Panc1 (cell line): ENCODE measurements at regions of chr14 and their contacts with region 1.

Region 1: DNA sequence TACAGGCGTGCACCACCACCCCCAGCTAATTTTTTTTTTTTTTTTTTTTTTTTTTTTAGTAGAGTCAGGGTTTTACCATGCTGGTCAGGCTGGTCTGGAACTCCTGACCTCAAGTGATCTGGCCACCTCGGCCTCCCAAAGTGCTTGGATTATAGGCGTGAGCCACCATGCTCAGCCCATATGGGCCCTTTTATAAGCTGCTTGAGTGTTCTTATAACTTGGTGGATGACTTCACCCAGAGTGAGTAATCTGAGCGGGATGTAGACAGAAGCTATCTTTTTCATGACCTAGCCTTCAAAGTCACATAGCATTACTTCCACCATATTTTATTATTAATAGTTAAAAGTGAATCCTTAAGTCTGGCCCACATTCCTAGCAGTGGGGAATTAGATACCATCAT is 16.4 kb downstream of the BBOF1 start:
- DNase-seq: no peak
- ATAC-seq: no peak
- H3K4me3 ChIP-seq: no peak overlapping the region
- H3K27ac ChIP-seq: no peak overlapping the region
- H3K4me1 ChIP-seq: no peaks in the 10 kb centered on the region
- H3K27me3 ChIP-seq: no peaks in the 10 kb centered on the region
- CTCF ChIP-seq: no peak

Region 2: DNA sequence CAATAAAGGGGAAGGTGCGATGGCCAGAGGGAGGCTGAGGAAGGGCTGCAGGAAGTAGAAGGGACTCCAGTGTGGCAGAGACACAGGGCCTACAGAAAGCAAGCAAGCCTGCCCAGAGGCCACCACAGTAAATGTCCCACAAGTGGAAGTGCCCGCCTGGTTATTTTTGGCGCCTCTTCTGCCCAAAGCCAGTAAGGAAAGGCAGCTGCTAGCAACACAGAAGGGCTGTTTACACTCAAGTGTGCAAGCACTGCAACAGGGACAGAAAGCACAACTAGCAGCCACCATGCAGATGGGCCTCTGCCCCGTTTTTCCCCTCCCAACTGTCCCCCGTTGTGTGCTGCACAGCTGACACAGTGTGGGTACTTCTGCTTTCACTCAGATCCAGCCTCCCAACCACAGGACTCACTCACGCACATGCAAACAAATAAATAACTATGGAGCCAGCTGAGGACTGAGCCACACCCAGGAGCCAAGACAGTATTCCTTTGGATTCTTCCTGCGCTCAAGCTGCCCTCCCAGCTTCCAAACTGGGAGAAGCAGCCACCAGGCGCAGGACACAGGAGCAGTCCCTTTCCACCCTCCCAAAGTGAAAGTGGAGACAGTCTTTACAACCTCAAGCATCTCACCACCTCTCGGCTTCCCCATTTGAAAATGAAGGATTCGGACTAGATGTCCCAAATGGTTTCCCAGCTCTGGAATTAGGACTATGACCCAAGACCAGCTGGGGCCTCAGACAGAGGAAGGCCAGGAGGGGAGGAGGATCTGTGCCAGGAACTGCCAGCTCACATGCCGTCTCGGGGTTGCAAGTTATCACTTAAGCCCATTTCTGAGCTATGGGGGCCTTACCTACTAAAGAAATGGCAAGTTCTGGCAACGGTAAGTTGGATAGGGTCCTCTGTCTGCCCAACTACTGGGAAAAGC is 281.3 kb before region 1 on chr14:
- CTCF ChIA-PET with region 1: no interaction called
- POLR2A ChIA-PET with region 1: interaction called, 11 read pairs
- in situ Hi-C with region 1: no loop called
- intact Hi-C with region 1: no loop called
- DNase-seq: no peak
- ATAC-seq: peak; percentile 13
- H3K4me3 ChIP-seq: peak overlapping the region; percentile 16 to 85; a peak in 3 of 4 replicates
- H3K27ac ChIP-seq: peak overlapping the region; percentile 97
- H3K4me1 ChIP-seq: peaks cover 86% of the 10 kb centered on the region
- H3K27me3 ChIP-seq: no peaks in the 10 kb centered on the region
- CTCF ChIP-seq: no peak

Region 3: DNA sequence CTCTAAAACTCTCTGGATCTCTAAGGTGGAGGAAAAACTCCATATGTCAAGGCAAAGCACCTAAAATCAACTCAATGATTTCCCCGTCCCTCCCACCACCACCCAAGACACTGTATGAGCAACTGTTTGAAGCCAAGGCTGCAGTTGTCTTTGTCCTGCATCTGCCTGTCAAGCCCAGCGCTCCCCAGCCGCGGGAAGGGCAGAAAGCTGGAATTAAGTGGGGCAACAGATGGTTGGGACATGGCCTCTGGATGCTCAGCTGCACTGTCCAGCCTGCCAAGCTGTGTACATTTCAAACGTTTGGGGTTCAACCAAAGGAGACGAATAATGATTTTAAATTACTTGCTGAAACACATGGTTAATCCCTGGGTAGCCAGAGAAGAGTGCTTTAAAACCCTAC is 226.2 kb before region 1 on chr14:
- CTCF ChIA-PET with region 1: no interaction called
- POLR2A ChIA-PET with region 1: no interaction called
- in situ Hi-C with region 1: no loop called
- intact Hi-C with region 1: no loop called
- DNase-seq: no peak
- ATAC-seq: no peak
- H3K4me3 ChIP-seq: no peak overlapping the region
- H3K27ac ChIP-seq: no peak overlapping the region
- H3K4me1 ChIP-seq: no peaks in the 10 kb centered on the region
- H3K27me3 ChIP-seq: no peaks in the 10 kb centered on the region
- CTCF ChIP-seq: no peak

Region 4: DNA sequence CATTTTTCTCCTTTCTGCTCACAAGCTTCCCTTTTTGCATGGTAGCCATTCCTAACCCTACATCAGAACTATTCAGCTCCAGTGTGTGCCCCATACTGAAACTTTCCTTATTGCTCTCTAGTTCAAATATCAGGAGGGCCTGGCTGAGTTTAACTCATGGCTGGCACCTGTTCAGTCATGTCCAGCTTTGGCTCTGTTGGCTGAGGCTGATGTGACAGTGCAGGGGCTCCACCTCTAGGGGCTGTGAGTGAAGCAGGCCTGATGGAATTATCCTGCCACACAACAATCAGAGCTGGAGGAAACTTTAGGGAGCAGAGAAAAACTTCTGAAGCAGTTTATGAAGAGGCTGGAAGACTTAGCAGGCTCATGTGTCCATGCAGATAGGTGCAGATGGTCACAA is 77.0 kb before region 1 on chr14:
- CTCF ChIA-PET with region 1: no interaction called
- POLR2A ChIA-PET with region 1: interaction called, 13 read pairs
- in situ Hi-C with region 1: no loop called
- intact Hi-C with region 1: no loop called
- DNase-seq: no peak
- ATAC-seq: peak; percentile 63; the same call in 1 of the 2 replicates
- H3K4me3 ChIP-seq: no peak overlapping the region
- H3K27ac ChIP-seq: no peak overlapping the region
- H3K4me1 ChIP-seq: no peaks in the 10 kb centered on the region
- H3K27me3 ChIP-seq: no peaks in the 10 kb centered on the region
- CTCF ChIP-seq: no peak

Region 5: DNA sequence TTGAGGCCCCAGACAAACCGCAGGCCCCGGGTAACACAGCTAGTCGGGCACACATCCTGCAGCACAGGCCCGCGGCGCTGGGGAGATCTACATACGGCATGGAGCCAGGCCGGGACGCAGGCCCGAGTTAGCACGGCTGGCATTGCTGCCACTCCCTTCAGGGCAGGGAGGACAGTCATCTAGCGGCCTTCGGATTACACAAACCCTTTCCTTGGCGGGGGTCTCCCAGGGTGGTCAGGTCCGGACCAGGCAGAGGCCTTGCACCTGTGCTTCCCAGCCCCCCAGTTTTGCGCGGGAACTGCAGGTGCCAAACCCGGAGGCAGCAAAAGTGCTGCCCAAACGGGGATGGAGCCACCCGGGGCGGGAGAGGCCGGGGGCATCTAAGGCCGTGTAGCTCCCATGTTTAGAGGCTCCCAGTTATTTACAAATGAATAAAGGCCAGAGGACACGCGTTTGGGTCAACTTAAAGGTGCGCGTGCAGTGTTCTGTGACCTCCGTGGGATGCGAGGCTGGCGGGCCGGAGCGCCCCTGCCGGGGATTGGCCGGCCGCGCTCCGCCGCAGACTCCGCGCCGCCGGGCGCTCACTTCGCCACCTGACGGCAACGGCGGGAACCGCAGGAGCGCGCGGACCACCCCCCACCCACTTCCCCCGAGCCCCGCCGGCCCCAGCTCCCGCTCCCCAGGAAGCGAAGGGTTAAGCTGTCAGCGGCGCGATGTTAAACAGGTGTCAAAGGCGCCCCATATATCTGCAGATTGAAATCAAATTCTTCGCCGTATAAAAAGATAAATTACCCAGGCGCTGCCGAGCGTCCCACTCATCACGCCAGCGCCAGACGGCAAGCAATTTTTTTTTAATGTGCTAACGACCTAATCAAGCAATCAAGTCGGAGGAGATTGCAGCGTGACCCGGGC is 221.8 kb after region 1 on chr14:
- CTCF ChIA-PET with region 1: interaction called, 14 read pairs
- POLR2A ChIA-PET with region 1: no interaction called
- in situ Hi-C with region 1: no loop called
- intact Hi-C with region 1: no loop called
- DNase-seq: no peak
- ATAC-seq: peak; percentile 84
- H3K4me3 ChIP-seq: peak overlapping the region; percentile 41 to 59
- H3K27ac ChIP-seq: no peak overlapping the region
- H3K4me1 ChIP-seq: no peaks in the 10 kb centered on the region
- H3K27me3 ChIP-seq: no peaks in the 10 kb centered on the region
- CTCF ChIP-seq: peak; percentile 97

Region 6: GRCh38 chr14:74401504-74402241 is 366.1 kb after region 1 on chr14:
- CTCF ChIA-PET with region 1: no interaction called
- POLR2A ChIA-PET with region 1: no interaction called
- in situ Hi-C with region 1: no loop called
- intact Hi-C with region 1: no loop called
- DNase-seq: no peak
- ATAC-seq: peak; percentile 32; the same call in 1 of the 2 replicates
- H3K4me3 ChIP-seq: no peak overlapping the region
- H3K27ac ChIP-seq: no peak overlapping the region
- H3K4me1 ChIP-seq: no peaks in the 10 kb centered on the region; the same call in 1 of the 2 replicates
- H3K27me3 ChIP-seq: no peaks in the 10 kb centered on the region
- CTCF ChIP-seq: no peak